ENCODE measurements at regions of chr19 and their contacts with region 1.

Region 1: DNA sequence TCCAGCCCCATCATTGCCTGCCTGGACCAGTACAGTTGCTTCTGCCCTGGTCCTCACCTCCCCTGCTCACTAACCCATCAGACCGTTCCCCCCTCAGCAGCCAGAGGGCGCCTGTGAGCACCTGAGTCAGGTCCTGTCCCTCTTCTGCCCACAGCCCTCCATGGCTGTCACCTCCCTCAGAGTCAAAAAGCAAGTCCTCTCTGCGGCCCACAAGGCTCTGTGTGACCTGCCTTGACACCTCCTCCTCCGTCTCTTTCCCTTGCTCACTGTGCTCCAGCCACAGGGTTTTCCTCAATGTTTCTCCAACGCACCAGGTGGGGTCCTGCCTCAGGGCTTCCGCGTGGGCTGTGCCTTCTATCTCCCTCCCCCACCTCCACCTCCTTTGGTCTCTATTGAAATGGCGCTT is 29.4 kb upstream of the PTPRS start:
- DNase-seq: no peak
- H3K4me3 ChIP-seq: no peak overlapping the region
- H3K27ac ChIP-seq: no peak overlapping the region
- H3K4me1 ChIP-seq: no peaks in the 10 kb centered on the region
- H3K27me3 ChIP-seq: peaks cover 0 to 55% (median 0%) of the 10 kb centered on the region in 4 donors
- CTCF ChIP-seq: peak in 5 of 6 experiments; percentile 44 to 69 (median 58)
- POLR2A ChIP-seq: no peak

Region 2: GRCh38 chr19:5057861-5058260 is 312.1 kb before region 1 on chr19:
- intact Hi-C with region 1: loop called (anchors 10 kb)
- DNase-seq: no peak
- H3K4me3 ChIP-seq: no peak overlapping the region
- H3K27ac ChIP-seq: no peak overlapping the region
- H3K4me1 ChIP-seq: no peaks in the 10 kb centered on the region
- H3K27me3 ChIP-seq: no peaks in the 10 kb centered on the region
- CTCF ChIP-seq: no peak
- POLR2A ChIP-seq: no peak

Region 3: DNA sequence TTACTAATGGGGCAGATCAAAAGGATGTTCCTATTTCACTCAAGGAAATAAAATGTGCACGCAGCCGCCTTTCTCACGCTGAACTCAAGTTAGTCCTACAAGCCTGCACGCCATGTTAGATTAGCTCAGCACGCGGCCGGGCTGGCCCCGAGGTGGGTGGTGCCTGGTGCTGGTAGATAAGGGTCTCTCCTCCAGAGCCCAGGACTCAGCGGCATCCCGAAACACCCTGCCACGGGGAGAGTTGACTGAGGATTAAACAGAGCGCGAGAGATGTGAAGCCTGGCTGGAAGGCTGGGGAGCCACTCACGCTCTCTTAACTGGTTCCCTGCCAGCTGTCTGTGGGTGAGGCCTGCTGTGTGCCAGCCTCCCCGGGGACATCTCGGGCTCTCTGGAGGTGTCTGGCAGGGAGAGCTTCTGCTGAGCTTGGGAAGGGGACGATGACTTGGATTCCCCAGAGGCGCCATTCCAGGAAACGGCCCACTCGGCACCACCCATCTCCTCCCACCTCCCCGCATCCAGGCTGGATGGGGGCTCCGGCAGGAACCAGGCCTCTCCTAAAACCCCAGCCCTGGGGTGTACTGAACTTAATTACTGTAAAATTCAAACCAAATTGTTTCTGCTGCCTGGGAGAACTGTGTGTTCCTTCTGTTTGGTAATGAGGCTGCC is 278.8 kb before region 1 on chr19:
- intact Hi-C with region 1: no loop called
- DNase-seq: no peak
- H3K4me3 ChIP-seq: peak overlapping the region in 1 of 4 donors; percentile 23
- H3K27ac ChIP-seq: peak overlapping the region in 3 of 4 donors; percentile 54 to 74 (median 66)
- H3K4me1 ChIP-seq: peaks cover 0 to 20% (median 7%) of the 10 kb centered on the region in 3 donors
- H3K27me3 ChIP-seq: no peaks in the 10 kb centered on the region
- CTCF ChIP-seq: no peak
- POLR2A ChIP-seq: no peak

Region 4: DNA sequence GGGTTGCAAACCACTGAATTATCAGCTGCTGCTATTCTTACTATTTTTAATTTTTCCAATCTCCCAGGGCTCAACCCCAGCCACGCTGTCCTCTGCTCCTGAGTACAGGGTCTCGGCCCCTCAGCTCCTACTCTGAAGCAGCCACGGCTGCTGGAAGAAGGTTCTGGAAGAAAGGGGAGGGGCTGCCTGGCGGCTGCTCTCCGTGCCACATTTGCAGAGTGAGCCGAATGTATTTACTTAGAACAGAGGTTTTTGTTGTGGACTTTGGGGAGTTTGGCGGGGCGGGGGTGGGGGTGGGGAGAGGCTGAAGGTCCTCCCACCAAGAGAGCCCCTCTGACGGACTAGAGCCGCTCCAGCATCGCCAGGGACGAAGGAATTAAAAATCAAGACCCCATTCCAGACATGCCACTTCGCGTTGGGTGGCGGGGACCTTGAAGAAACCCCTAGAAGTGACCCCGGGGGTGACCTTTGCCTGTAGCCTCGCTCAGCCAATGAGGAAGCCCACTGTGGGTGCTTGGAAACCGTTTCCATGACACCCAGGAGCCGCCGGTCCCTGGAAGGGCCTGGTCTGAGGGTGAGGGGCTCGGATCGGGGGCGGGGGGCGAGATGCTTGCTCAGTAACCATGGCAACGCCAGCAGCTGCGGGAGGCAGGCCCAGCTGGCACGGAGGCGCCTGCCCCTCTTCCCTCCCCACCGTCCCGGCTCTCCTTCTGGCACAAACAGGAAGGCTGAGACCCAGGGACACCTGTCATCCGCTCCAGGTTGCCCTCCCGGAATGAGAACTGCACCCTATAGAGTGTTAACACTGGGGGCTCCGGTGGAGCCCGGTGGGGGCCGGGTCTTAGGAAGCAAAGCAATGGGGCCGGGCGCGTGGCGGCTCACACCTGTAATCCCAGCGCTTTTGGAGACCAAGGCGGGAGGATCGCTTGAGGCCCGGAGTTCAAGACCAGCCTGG is 24.9 kb after region 1 on chr19:
- intact Hi-C with region 1: no loop called
- DNase-seq: no peak
- H3K4me3 ChIP-seq: no peak overlapping the region
- H3K27ac ChIP-seq: no peak overlapping the region
- H3K4me1 ChIP-seq: no peaks in the 10 kb centered on the region
- H3K27me3 ChIP-seq: peaks cover 0 to 91% (median 9%) of the 10 kb centered on the region in 4 donors
- CTCF ChIP-seq: no peak
- POLR2A ChIP-seq: no peak